Activated CD4-positive, alpha-beta T cell treated with anti-CD3 and anti-CD28 coated beads for 36 hours (primary cell): ENCODE measurements at regions of chr12 and their contacts with region 1.

Region 1: GRCh38 chr12:69885658-69886057 is 60.6 kb downstream of the MYRFL start:
- DNase-seq: no peak
- ATAC-seq: no peak
- H3K4me3 Mint-ChIP-seq: no peak overlapping the region
- H3K27ac Mint-ChIP-seq: no peak overlapping the region
- H3K4me1 Mint-ChIP-seq: no peaks in the 10 kb centered on the region
- H3K27me3 Mint-ChIP-seq: peaks cover 2% of the 10 kb centered on the region

Region 2: GRCh38 chr12:69602954-69603353 is 282.7 kb before region 1 on chr12:
- CTCF ChIA-PET with region 1: no interaction called
- POLR2A ChIA-PET with region 1: no interaction called
- intact Hi-C with region 1: no loop called
- DNase-seq: no peak
- ATAC-seq: no peak
- H3K4me3 Mint-ChIP-seq: no peak overlapping the region
- H3K27ac Mint-ChIP-seq: no peak overlapping the region
- H3K4me1 Mint-ChIP-seq: no peaks in the 10 kb centered on the region
- H3K27me3 Mint-ChIP-seq: no peaks in the 10 kb centered on the region

Region 3: DNA sequence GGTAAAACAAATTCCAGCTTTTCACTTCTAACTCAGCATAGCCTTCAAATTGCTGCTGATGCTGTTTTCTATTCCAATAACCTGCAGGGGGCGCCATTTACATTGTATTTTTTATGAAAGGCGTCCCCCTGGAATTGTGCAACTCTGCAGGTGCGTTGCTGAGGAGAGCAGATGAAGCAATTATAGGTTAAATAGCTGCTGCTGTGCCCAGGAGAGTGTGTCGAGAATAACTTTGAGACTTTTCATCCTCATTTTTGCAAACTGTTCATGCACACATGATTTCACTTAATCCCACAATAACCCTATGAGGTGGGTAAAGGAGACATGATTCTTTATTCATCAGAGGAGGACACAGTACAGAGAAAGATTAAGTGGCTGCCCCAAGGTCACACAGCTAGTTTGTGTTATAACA is 15.1 kb after region 1 on chr12:
- CTCF ChIA-PET with region 1: interaction called, 32 read pairs
- POLR2A ChIA-PET with region 1: no interaction called
- intact Hi-C with region 1: no loop called
- DNase-seq: peak; percentile 76
- ATAC-seq: peak; percentile 30
- H3K4me3 Mint-ChIP-seq: no peak overlapping the region
- H3K27ac Mint-ChIP-seq: no peak overlapping the region
- H3K4me1 Mint-ChIP-seq: peaks cover 2% of the 10 kb centered on the region
- H3K27me3 Mint-ChIP-seq: no peaks in the 10 kb centered on the region

Region 4: DNA sequence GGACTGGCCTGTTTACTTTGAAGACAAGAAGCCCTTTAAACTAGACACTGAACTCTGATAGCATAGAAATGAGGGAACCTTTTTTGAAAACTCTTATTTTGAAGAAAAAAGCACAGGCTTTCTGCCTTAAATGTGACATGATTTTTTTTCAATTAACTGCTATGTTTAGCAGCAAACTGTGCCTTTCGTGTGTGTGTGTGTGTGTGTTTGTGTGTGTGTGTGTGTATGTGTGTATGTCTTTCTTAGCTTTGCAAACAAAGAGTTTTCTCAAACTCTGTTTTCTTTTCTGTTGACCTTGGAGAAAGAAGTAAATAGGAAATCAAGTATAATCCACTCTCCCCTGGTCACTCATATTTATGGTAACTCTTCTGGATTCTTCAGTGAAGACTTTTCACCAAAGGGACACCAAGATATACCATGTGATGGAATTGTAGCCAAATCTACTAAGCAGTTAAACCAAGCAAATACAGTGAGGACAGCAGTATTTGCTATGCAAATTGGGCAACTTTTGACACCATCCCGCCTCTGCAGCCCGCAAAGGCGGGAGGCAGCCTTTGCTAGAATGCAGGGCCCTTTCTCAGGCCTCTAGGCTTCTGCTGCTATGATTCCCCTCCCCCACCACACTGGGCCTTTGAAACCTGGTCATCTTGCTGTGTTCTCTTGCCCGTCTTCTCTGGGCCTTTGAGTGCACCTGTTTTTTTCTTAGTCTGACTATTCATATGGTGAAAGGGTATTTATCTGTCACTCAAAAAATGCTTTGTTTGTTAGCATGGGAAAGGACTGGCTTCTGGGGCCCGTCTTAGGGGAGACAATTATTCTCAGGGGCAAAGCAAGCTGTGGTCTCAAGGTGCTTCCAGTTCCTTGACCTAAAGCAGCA is 47.3 kb after region 1 on chr12:
- CTCF ChIA-PET with region 1: no interaction called
- POLR2A ChIA-PET with region 1: no interaction called
- intact Hi-C with region 1: no loop called
- DNase-seq: no peak
- ATAC-seq: no peak
- H3K4me3 Mint-ChIP-seq: no peak overlapping the region
- H3K27ac Mint-ChIP-seq: no peak overlapping the region
- H3K4me1 Mint-ChIP-seq: no peaks in the 10 kb centered on the region
- H3K27me3 Mint-ChIP-seq: no peaks in the 10 kb centered on the region

Region 5: GRCh38 chr12:71312768-71313403 is 1427.2 kb after region 1 on chr12:
- CTCF ChIA-PET with region 1: no interaction called
- POLR2A ChIA-PET with region 1: no interaction called
- intact Hi-C with region 1: no loop called
- DNase-seq: no peak
- ATAC-seq: no peak
- H3K4me3 Mint-ChIP-seq: no peak overlapping the region
- H3K27ac Mint-ChIP-seq: no peak overlapping the region
- H3K4me1 Mint-ChIP-seq: no peaks in the 10 kb centered on the region
- H3K27me3 Mint-ChIP-seq: peaks cover 1% of the 10 kb centered on the region